ENCODE measurements at regions of chr6 and their contacts with region 1.

Region 1: DNA sequence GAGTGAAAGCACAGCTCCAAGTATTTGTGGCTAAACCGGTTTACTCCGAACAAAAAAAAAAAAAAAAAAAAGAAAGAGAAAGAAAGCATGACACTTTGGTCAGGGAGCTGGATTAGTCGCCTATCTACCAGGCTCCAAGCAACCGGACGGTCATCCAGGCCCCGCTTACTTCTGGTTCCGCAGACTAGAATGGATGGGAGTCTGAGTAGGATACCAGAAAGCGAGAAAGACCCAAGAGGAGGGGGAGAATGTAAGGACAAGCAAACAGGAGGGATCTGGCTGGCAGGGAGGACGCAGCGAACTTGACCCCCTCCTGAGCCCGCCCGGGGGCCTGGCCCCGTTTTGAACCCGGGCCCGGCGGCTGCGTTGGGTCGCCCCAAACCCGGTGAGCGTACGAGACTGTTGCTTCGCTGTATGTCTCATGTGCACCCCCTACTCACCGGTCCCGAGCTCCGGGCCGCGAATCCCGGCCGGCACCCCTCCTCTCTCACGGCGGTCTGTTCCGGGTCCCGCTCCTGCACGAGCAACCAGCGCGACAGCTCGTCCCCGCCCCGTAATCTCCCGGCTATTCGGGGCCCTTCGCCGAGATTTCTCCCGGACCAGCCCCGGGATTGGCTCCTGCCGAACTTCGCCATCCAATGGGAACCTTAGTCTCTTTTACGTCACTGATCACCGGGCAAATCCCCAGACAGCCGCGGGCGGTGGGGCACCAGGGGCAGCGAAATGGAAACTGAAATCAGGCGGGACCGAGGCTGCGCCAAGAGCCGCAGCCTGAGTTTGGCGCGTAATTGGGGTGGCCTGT is at the start of gene TRIM26:
- DNase-seq: peak; percentile 98
- ATAC-seq: peak; percentile 90
- H3K4me3 Mint-ChIP-seq: peak within 1 kb of the TSS; percentile 90
- H3K27ac Mint-ChIP-seq: peak within 1 kb of the TSS; percentile 99
- H3K4me1 Mint-ChIP-seq: peaks cover 49% of the 10 kb centered on the region
- H3K27me3 Mint-ChIP-seq: peaks cover 3% of the 10 kb centered on the region
- total RNA-seq, gene TRIM26: 78.0 to 86.4 TPM

Region 2: GRCh38 chr6:30066577-30067459 is 146.2 kb before region 1 on chr6 and contains the start of gene PPP1R11:
- CTCF ChIA-PET with region 1: no interaction called
- POLR2A ChIA-PET with region 1: interaction called, 17 read pairs
- DNase-seq: peak; percentile 100
- ATAC-seq: peak; percentile 98
- H3K4me3 Mint-ChIP-seq: peak within 1 kb of the TSS; percentile 87
- H3K27ac Mint-ChIP-seq: peak within 1 kb of the TSS; percentile 94
- H3K4me1 Mint-ChIP-seq: peaks cover 54% of the 10 kb centered on the region
- H3K27me3 Mint-ChIP-seq: peaks cover 10% of the 10 kb centered on the region
- total RNA-seq, gene PPP1R11: 48.1 to 50.3 TPM

Region 3: DNA sequence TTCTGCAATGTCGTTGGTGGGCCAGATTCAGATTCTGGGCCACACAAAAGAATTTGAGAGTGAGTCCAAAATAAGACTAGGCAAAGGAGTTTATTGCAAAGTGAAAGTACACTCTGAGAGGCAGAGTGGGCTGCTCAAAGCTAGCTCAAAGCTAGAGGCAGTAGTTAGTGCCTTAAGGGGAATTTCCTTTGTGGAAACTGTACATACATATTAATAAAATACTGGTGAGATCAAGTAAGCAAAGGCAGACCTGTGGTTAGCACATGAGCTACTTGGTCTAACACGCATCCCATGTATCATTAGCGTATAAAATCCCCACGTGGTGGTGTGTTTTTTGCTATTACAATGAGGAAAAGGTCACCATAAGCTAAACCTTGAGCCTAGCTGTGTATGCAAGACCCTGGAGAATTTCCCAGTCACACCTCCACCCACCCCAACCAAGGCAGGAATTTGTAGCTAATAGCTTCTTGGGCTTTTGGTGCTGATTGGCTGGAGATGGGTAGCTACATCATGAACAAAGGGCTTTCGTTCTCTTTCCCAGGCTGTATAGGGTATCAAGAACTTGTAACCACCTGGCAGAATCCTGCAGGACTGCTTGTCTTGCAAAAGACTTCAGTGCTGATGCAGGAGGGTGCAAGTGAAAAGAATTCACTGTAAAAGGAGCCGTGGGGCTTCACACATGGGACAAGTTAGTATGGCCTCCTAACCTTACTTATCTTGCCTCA is 14.9 kb after region 1 on chr6:
- CTCF ChIA-PET with region 1: interaction called, 15 read pairs
- POLR2A ChIA-PET with region 1: interaction called, 16 read pairs
- DNase-seq: no peak
- ATAC-seq: no peak
- H3K4me3 Mint-ChIP-seq: no peak overlapping the region
- H3K27ac Mint-ChIP-seq: no peak overlapping the region
- H3K4me1 Mint-ChIP-seq: peaks cover 6% of the 10 kb centered on the region
- H3K27me3 Mint-ChIP-seq: peaks cover 17% of the 10 kb centered on the region

Region 4: DNA sequence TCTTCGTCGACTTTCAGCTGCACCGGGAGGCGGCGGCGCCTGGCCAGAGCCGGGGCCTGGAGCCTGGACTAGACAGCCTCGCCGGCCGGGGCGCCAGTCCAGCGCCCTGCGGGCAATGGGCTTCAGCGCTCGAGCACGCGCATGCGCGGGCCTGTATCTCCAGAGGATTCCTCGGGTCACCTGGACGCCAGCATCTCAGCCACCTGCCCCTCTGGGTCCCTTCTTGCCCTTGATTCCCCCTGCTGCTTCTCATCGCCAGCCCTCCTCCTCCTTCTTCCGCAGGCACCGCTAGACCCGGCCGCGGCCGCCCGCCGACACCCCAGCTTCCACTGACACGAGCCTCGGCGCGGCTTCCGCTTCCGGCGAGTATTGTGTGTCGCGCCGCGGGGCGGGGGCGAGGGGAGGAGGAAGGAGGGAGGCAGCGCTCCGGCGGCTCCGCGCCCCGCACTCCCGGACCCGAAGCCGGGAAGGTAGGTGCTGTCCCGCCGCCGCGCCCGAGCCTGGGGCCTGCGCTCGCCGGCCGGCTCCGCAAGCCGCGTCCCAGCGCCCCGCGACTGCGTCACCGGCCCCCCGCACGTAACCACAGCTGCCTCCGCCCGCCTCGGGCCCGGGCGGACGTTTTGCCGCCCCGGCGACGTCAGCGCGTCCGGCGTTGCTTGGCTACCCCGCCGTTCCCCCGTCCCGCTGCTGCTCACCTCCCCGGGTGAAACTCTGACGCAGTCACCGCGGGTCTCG is 113.6 kb after region 1 on chr6 and contains the start of gene TRIM39:
- CTCF ChIA-PET with region 1: interaction called, 11 read pairs
- POLR2A ChIA-PET with region 1: interaction called, 25 read pairs
- DNase-seq: peak; percentile 92
- ATAC-seq: peak; percentile 73
- H3K4me3 Mint-ChIP-seq: peak within 1 kb of the TSS; percentile 96
- H3K27ac Mint-ChIP-seq: peak within 1 kb of the TSS; percentile 99
- H3K4me1 Mint-ChIP-seq: peaks cover 53% of the 10 kb centered on the region
- H3K27me3 Mint-ChIP-seq: no peaks in the 10 kb centered on the region
- total RNA-seq, gene TRIM39: 16.7 to 16.9 TPM

Region 5: DNA sequence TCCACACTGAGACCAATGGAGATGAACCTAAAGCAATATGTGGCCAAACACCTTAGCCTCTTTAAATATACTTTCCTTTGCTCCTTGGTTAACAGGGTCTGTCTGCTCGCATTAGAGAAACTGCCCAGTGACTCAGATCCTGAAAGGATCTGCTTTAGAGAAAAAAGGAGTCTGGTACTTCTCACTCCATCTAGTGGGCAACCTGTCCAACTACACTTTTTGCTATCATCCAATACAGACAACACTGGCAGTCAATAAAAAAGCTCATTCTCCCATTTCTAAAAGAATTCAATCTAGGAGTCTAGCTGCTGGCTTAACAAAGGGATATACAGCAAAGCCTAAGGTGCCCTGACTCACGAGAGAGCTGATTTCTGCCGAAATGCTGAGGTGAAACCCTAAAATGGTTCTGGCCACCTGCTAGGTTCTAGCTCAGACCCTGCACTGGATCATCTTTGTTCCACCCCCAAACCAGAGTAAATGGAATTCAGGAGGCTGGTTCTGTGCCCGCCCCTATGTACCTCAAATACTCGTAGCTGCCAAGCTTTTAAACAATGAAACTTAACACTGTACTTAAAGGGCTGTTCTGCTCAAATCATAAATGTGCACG is 331.7 kb after region 1 on chr6:
- CTCF ChIA-PET with region 1: no interaction called
- POLR2A ChIA-PET with region 1: no interaction called
- DNase-seq: peak; percentile 42
- ATAC-seq: peak; percentile 48
- H3K4me3 Mint-ChIP-seq: no peak overlapping the region
- H3K27ac Mint-ChIP-seq: no peak overlapping the region
- H3K4me1 Mint-ChIP-seq: peaks cover 34% of the 10 kb centered on the region
- H3K27me3 Mint-ChIP-seq: no peaks in the 10 kb centered on the region

Measured in activated CD8-positive, alpha-beta T cell treated with anti-CD3 and anti-CD28 coated beads, Interleukin-2, amount 10 ng/mL, durations not matched to agents 7 days and 5 days (primary cell).